ENCODE measurements at regions of chr9 and their contacts with region 1.

Region 1: GRCh38 chr9:124852829-124853531 is at the start of gene WDR38:
- DNase-seq: no peak
- H3K4me3 ChIP-seq: peak within 1 kb of the TSS; percentile 42
- CTCF ChIP-seq: peak; percentile 82

Region 2: DNA sequence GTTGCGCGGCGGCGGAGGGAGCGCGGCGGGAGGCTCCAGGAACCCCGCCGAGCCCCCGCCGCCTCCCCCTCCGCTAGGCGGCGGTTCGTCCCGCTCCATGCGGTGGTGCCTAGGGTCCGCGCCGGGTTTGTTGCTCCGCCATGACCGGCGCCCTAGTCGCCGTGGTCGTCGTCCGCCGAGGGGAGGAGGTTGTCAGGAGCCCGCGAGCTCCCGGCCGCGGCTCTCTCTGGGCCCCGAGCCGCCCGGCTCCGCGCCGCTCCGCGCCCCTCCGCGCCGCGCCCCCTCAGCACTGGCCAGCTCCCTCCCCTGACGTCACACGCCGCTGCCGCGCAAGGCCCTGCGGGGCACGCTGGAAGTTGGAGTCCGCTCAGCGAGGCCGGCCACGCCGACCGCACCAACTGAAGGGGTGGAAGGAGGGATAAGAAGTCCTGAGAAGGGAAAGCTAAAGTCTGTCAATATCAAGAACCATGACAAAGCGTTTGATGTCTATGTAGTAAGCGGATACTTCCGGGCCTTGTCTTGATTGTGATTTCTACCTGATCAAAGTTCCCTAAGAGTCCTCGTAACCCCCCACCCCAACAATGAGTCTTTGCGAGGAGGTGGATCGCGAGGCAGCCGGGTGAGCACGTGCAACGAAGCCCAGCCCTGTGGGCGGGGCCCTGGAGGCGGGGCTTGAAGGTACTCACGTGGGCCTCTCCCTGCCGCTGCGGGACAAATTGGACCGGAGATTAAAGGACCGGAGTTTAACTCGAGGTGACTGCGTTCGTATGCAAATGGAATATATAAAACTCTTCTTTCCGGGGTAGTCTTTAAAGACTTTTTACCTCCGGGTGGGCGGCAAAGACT is 81.7 kb before region 1 on chr9 and contains the start of gene NR6A1:
- in situ Hi-C with region 1: loop called (anchors 5 kb)
- DNase-seq: peak; percentile 91
- H3K4me3 ChIP-seq: peak within 1 kb of the TSS; percentile 66
- CTCF ChIP-seq: peak; percentile 19

Measured in astrocyte of the cerebellum (primary cell).